ENCODE measurements at regions of chr1 and their contacts with region 1.

Region 1: GRCh38 chr1:43280692-43281091 is 4.7 kb downstream of the C1orf210 start:
- DNase-seq: no peak
- ATAC-seq: no peak
- H3K4me3 ChIP-seq: no peak overlapping the region
- H3K27ac ChIP-seq: no peak overlapping the region
- H3K4me1 ChIP-seq: no peaks in the 10 kb centered on the region
- H3K27me3 ChIP-seq: no peaks in the 10 kb centered on the region
- CTCF ChIP-seq: no peak

Region 2: GRCh38 chr1:43358746-43359693 is 78.3 kb after region 1 on chr1 and contains the start of gene CDC20:
- CTCF ChIA-PET with region 1: interaction called, 13 read pairs
- POLR2A ChIA-PET with region 1: no interaction called
- in situ Hi-C with region 1: no loop called
- intact Hi-C with region 1: no loop called
- DNase-seq: peak; percentile 93
- ATAC-seq: peak; percentile 95
- H3K4me3 ChIP-seq: peak within 1 kb of the TSS; percentile 90 to 95
- H3K27ac ChIP-seq: peak within 1 kb of the TSS; percentile 100
- H3K4me1 ChIP-seq: peaks cover 28% of the 10 kb centered on the region
- H3K27me3 ChIP-seq: no peaks in the 10 kb centered on the region
- CTCF ChIP-seq: no peak
- total RNA-seq, gene CDC20: 215 TPM

Measured in Panc1 (cell line).